AG04450 (cell line): ENCODE measurements at regions of chrX and their contacts with region 1.

Region 1: GRCh38 chrX:70313503-70313902 is 23.6 kb downstream of the KIF4A start:
- DNase-seq: no peak
- H3K4me3 ChIP-seq: no peak overlapping the region
- H3K27ac ChIP-seq: no peak overlapping the region
- H3K27me3 ChIP-seq: no peaks in the 10 kb centered on the region
- CTCF ChIP-seq: no peak

Region 2: DNA sequence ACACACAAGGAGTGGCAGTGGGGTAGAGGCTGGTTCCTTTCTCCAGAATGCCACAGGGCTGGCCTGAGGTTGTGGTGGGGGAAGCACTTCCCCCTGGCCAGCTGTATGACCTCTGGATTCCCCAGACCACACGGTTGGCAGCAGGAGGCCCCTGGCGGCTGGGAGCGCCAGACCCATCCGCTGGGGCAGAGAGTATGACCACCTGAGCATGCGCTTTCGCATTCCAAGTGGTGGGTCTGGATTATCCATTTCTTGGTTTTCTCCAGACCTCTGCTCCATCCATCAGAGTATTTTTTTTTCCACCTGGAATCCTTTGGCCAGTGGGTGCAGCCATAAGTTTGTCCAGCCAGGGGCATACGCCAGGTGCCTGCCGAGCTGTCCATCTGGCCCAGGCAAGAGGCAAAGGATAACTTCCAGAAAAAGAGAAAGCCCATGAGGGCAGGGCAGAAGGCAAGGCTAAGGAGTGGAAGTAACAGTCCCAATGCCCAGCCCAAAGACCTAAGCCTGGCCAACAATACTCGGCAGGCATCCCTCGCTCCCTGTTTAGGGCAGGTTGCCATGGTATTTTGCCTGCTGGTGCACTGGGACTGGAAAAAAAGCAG is 1636.4 kb after region 1 on chrX:
- CTCF ChIA-PET with region 1: no interaction called
- POLR2A ChIA-PET with region 1: interaction called, 10 read pairs
- DNase-seq: no peak
- H3K4me3 ChIP-seq: no peak overlapping the region
- H3K27ac ChIP-seq: no peak overlapping the region
- H3K27me3 ChIP-seq: no peaks in the 10 kb centered on the region
- CTCF ChIP-seq: no peak